HepG2 (cell line): ENCODE measurements at regions of chr15 and their contacts with region 1.

Region 1: DNA sequence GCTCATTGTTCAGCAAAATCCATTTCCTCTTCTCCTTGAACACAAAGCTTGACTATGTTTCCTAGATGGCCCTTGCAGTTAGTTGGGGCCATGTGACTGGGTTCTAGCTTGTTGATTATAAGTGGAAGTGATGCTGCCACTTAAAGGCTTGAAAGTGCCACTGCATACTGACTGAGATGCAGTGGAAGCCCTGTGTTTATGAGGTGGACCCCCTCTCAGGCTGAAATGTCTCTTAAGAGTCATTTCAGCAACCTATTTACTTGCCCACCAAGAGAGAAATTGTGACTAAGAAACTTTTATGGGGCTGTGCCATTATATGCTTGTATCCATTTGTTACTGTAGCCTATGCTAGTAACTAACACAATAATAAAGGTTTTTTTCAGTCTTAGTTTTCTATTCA is 8.4 kb upstream of the ANP32A start:
- DNase-seq: peak; percentile 27
- ATAC-seq: peak; percentile 77
- H3K4me3 ChIP-seq: no peak overlapping the region
- H3K27ac ChIP-seq: no peak overlapping the region
- H3K4me1 ChIP-seq: no peaks in the 10 kb centered on the region
- H3K27me3 ChIP-seq: peaks cover 0 to 9% of the 10 kb centered on the region in 2 experiments; a peak in 1 of 5 replicates
- CTCF ChIP-seq: peak; percentile 54
- EP300 ChIP-seq: no peak
- POLR2A ChIP-seq: no peak
- RAD21 ChIP-seq: peak; percentile 42; the same call in 1 of the 2 replicates

Region 2: DNA sequence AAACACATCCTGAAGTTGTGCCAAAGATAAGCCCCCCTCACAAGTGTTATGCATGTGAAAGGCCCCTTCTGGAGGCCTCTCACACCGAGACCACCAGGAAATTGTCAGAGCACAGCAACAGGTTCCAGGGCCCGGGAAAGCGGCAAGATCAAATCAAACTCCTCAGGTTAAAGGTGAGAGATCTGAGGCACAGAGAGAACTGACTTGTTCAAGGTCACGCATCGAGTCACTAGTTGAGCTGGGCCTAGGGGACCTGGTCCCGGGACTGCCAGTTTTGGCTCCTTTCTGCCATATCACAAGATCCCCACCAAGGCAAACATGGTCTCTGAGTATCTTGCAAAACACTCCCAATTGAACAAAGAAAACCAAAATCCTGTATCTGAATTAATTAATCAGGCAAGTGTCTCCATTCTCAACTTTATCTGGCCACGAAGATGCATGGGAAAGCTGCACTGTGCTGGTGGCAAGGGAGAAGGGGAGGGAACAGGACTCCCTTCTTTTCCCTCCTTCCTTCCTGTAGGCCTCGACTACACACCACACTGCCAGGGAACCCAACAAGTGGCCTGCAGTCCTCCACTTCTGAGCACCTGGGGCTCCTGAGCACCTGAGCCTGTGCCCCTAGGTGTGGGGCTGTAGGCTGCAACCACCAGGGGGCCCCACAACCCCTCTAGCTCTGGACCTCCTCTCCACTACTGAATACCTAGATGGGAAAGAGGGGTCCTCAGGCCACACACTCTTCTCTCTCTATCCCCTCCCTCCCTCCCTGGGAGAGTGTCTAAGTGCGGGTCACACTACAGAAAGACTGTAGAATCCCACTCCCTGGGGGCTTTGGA is 45.6 kb before region 1 on chr15:
- CTCF ChIA-PET with region 1: no interaction called
- POLR2A ChIA-PET with region 1: no interaction called
- in situ Hi-C with region 1: no loop called
- intact Hi-C with region 1: loop called (anchors 1 kb)
- DNase-seq: peak; percentile 19
- ATAC-seq: peak; percentile 93
- H3K4me3 ChIP-seq: no peak overlapping the region
- H3K27ac ChIP-seq: no peak overlapping the region
- H3K4me1 ChIP-seq: no peaks in the 10 kb centered on the region
- H3K27me3 ChIP-seq: no peaks in the 10 kb centered on the region
- CTCF ChIP-seq: peak; percentile 73
- EP300 ChIP-seq: no peak
- POLR2A ChIP-seq: no peak
- RAD21 ChIP-seq: peak; percentile 62; the same call in 1 of the 2 replicates

Region 3: GRCh38 chr15:68801572-68802148 is 27.4 kb before region 1 on chr15:
- CTCF ChIA-PET with region 1: no interaction called
- POLR2A ChIA-PET with region 1: no interaction called
- in situ Hi-C with region 1: no loop called
- intact Hi-C with region 1: loop called (anchors 2 kb)
- DNase-seq: no peak
- ATAC-seq: no peak
- H3K4me3 ChIP-seq: no peak overlapping the region
- H3K27ac ChIP-seq: no peak overlapping the region
- H3K4me1 ChIP-seq: peaks cover 28% of the 10 kb centered on the region
- H3K27me3 ChIP-seq: no peaks in the 10 kb centered on the region
- CTCF ChIP-seq: no peak
- EP300 ChIP-seq: no peak
- POLR2A ChIP-seq: no peak
- RAD21 ChIP-seq: no peak